HEK293 (cell line): ENCODE measurements at regions of chr2 and their contacts with region 1.

Region 1: DNA sequence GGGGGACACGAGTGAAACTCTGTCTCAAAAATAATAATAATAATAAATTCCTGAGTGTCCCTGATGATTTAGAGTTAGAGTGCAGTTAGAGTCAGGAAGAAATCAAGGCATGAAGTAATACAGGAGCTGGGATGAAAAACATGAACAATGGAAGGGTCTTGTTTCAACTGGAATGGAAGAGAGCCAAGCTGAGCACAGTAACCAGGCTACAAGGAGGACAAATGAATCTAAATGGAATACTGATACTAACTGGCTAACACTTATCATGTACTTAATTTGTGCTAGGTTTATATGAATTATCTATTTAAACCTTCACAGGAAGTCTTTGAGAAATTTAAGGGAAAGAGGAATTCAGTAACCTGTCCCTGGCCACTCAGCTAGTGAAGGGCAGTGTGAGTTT is 38.8 kb upstream of the PSME4 start:
- H3K4me3 ChIP-seq: no peak overlapping the region
- H3K27ac ChIP-seq: no peak overlapping the region
- H3K4me1 ChIP-seq: no peaks in the 10 kb centered on the region
- CTCF ChIP-seq: no peak

Region 2: GRCh38 chr2:54074606-54075341 is 65.2 kb after region 1 on chr2:
- CTCF ChIA-PET with region 1: no interaction called
- POLR2A ChIA-PET with region 1: interaction called, 10 read pairs
- H3K4me3 ChIP-seq: no peak overlapping the region
- H3K27ac ChIP-seq: no peak overlapping the region
- H3K4me1 ChIP-seq: no peaks in the 10 kb centered on the region
- CTCF ChIP-seq: no peak